Adrenal gland (tissue), 19 donors: ENCODE measurements at regions of chr3 and their contacts with region 1.

Region 1: GRCh38 chr3:191051037-191051436 is 148.0 kb upstream of the OSTN start:
- DNase-seq: no peak
- H3K4me3 ChIP-seq: no peak overlapping the region
- H3K27ac ChIP-seq: no peak overlapping the region
- H3K4me1 ChIP-seq: no peaks in the 10 kb centered on the region
- H3K27me3 ChIP-seq: peaks cover 6% of the 10 kb centered on the region
- CTCF ChIP-seq: peak; percentile 30 to 61 (median 46)
- POLR2A ChIP-seq: no peak

Region 2: DNA sequence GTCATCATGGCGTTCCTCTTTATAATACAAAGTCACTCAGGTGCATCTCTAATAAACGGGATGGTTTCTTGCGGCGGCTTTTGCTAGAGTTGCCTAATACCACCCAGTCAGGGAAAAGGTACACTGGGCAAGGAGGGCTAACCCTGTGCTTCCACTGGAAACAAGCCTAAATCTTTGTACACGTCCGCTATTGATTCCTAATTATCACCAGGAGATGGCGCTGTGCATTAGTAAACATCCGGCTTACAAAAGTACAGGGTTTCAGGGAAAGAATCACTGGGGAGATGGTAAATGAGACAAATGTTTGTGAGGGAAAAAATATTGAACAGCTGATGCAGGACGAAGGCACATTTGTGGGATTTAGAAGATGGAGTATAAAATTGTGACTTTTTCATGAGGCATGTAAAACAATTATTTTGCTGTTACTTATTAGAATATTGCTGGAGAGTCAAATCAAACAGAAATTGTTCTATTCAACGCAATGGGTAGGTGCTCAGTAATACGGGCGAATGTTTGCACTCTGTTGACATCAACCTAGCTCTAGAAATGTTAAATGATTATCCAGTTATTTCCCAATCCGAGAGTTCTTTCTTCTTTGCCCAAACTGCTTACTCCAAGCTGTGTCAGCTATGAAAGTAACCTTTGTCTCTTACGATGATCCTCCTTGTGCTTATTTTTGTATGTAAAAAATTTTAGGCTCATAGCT is 239.1 kb before region 1 on chr3:
- intact Hi-C with region 1: loop called in 1 of 2 experiments (anchors 5 kb)
- DNase-seq: peak in 6 of 7 donors; percentile 21 to 62 (median 37)
- H3K4me3 ChIP-seq: no peak overlapping the region
- H3K27ac ChIP-seq: no peak overlapping the region
- H3K4me1 ChIP-seq: peaks cover 0 to 3% of the 10 kb centered on the region in 2 donors
- H3K27me3 ChIP-seq: peaks cover 9% of the 10 kb centered on the region
- CTCF ChIP-seq: peak; percentile 33 to 58 (median 48)
- POLR2A ChIP-seq: no peak

Region 3: GRCh38 chr3:190886945-190887344 is 164.1 kb before region 1 on chr3:
- intact Hi-C with region 1: loop called in 1 of 2 experiments (anchors 5 kb)
- DNase-seq: no peak
- H3K4me3 ChIP-seq: no peak overlapping the region
- H3K27ac ChIP-seq: no peak overlapping the region
- H3K4me1 ChIP-seq: no peaks in the 10 kb centered on the region
- H3K27me3 ChIP-seq: no peaks in the 10 kb centered on the region
- CTCF ChIP-seq: no peak
- POLR2A ChIP-seq: no peak

Region 4: GRCh38 chr3:191094057-191094845 is 43.2 kb after region 1 on chr3:
- intact Hi-C with region 1: no loop called
- DNase-seq: no peak
- H3K4me3 ChIP-seq: no peak overlapping the region
- H3K27ac ChIP-seq: no peak overlapping the region
- H3K4me1 ChIP-seq: no peaks in the 10 kb centered on the region
- H3K27me3 ChIP-seq: no peaks in the 10 kb centered on the region
- CTCF ChIP-seq: no peak
- POLR2A ChIP-seq: no peak